ENCODE measurements at regions of chr1 and their contacts with region 1.

Region 1: GRCh38 chr1:51284487-51284954 is 45.8 kb downstream of the TTC39A start:
- DNase-seq: no peak
- H3K4me3 Mint-ChIP-seq: no peak overlapping the region
- H3K27ac Mint-ChIP-seq: peak overlapping the region; percentile 84
- H3K4me1 Mint-ChIP-seq: peaks cover 58% of the 10 kb centered on the region
- H3K27me3 Mint-ChIP-seq: no peaks in the 10 kb centered on the region

Region 2: DNA sequence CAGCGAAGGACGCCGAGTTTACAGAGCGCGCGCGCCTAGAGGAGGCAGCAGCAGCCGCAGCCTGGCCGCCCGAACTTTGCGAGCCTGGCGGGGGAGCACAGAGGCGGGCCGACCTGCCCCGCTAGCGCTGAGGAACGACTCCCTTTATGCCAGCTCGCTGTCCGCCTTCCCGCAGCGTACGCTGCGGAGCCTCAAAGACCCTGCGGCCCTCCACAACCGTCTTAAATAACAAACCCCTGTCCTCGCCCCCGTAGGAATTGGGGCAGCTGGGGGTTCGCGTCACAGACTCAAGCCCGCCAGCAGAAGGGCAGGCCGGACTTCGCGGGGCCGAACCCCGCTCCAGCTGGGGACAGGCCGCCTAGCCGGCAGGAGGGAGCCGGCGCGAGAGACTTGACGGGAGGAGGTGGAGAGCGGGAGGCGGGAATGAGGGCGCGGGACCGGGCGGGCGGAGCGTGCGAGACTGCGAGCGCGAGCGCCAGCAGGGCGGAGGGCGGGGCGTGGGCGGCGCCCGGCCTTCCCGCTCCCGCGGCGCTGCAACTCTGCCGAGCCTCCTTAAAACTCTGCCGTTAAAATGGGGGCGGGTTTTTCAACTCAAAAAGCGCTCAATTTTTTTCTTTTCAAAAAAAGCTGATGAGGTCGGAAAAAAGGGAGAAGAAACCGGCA is 316.2 kb before region 1 on chr1:
- intact Hi-C with region 1: loop called (anchors 5 kb)
- DNase-seq: peak; percentile 84
- H3K4me3 Mint-ChIP-seq: peak overlapping the region; percentile 95
- H3K27ac Mint-ChIP-seq: peak overlapping the region; percentile 96
- H3K4me1 Mint-ChIP-seq: peaks cover 23% of the 10 kb centered on the region
- H3K27me3 Mint-ChIP-seq: peaks cover 13% of the 10 kb centered on the region

Region 3: GRCh38 chr1:51235673-51236530 is 48.6 kb before region 1 on chr1 and contains the start of gene RNF11:
- intact Hi-C with region 1: loop called (anchors 1 kb)
- DNase-seq: peak; percentile 90
- H3K4me3 Mint-ChIP-seq: peak within 1 kb of the TSS; percentile 93
- H3K27ac Mint-ChIP-seq: peak within 1 kb of the TSS; percentile 85
- H3K4me1 Mint-ChIP-seq: peaks cover 34% of the 10 kb centered on the region
- H3K27me3 Mint-ChIP-seq: no peaks in the 10 kb centered on the region
- total RNA-seq, gene RNF11: 64.8 and 65.6 TPM in 2 replicates

Region 4: GRCh38 chr1:51296383-51297357 is 12.1 kb after region 1 on chr1:
- intact Hi-C with region 1: loop called (anchors 2 kb)
- DNase-seq: peak; percentile 70
- H3K4me3 Mint-ChIP-seq: peak overlapping the region; percentile 41
- H3K27ac Mint-ChIP-seq: peak overlapping the region; percentile 51
- H3K4me1 Mint-ChIP-seq: peaks cover 38% of the 10 kb centered on the region
- H3K27me3 Mint-ChIP-seq: no peaks in the 10 kb centered on the region

Region 5: GRCh38 chr1:51378871-51379270 is 94.3 kb after region 1 on chr1:
- intact Hi-C with region 1: no loop called
- DNase-seq: no peak
- H3K4me3 Mint-ChIP-seq: no peak overlapping the region
- H3K27ac Mint-ChIP-seq: no peak overlapping the region
- H3K4me1 Mint-ChIP-seq: peaks cover 3% of the 10 kb centered on the region
- H3K27me3 Mint-ChIP-seq: no peaks in the 10 kb centered on the region

Region 6: GRCh38 chr1:51504806-51505525 is 220.4 kb after region 1 on chr1:
- intact Hi-C with region 1: loop called (anchors 1 kb)
- DNase-seq: no peak
- H3K4me3 Mint-ChIP-seq: no peak overlapping the region
- H3K27ac Mint-ChIP-seq: peak overlapping the region; percentile 60
- H3K4me1 Mint-ChIP-seq: peaks cover 16% of the 10 kb centered on the region
- H3K27me3 Mint-ChIP-seq: no peaks in the 10 kb centered on the region